A673 (cell line): ENCODE measurements at regions of chr10 and their contacts with region 1.

Region 1: GRCh38 chr10:26269754-26270153 is 53.2 kb downstream of the GAD2 start:
- DNase-seq: peak; percentile 81
- H3K4me3 ChIP-seq: peak overlapping the region; percentile 29
- H3K27ac ChIP-seq: no peak overlapping the region
- H3K4me1 ChIP-seq: peaks cover 5% of the 10 kb centered on the region
- H3K27me3 ChIP-seq: no peaks in the 10 kb centered on the region
- CTCF ChIP-seq: peak; percentile 74

Region 2: GRCh38 chr10:25725918-25726716 is 543.6 kb before region 1 on chr10:
- CTCF ChIA-PET with region 1: interaction called, 4 read pairs
- POLR2A ChIA-PET with region 1: no interaction called
- intact Hi-C with region 1: loop called (anchors 1 kb)
- DNase-seq: peak; percentile 89
- H3K4me3 ChIP-seq: no peak overlapping the region
- H3K27ac ChIP-seq: no peak overlapping the region
- H3K4me1 ChIP-seq: no peaks in the 10 kb centered on the region
- H3K27me3 ChIP-seq: no peaks in the 10 kb centered on the region
- CTCF ChIP-seq: peak; percentile 79

Region 3: DNA sequence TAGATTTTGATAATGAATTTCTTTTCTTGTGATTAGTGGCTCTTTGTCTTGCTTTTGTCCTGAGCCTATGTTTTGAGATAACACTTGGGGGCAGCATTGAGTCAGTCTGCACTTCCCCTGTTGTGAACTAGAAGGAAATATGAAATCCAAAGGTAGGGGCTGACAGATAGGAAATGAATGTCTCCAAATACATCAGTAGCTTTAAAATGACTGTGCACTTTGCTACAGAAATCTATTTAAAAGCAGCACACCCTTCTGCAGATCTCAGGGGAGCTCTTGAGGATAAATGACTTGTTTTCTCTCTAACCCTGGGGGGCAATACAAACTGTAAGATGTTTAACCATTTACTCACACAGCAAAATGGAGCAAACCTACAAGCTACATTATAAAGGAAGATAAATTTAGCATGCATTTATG is 511.7 kb before region 1 on chr10:
- CTCF ChIA-PET with region 1: interaction called, 5 read pairs
- POLR2A ChIA-PET with region 1: no interaction called
- intact Hi-C with region 1: loop called (anchors 2 kb)
- DNase-seq: peak; percentile 83
- H3K4me3 ChIP-seq: no peak overlapping the region
- H3K27ac ChIP-seq: no peak overlapping the region
- H3K4me1 ChIP-seq: peaks cover 6% of the 10 kb centered on the region
- H3K27me3 ChIP-seq: no peaks in the 10 kb centered on the region
- CTCF ChIP-seq: peak; percentile 88

Region 4: DNA sequence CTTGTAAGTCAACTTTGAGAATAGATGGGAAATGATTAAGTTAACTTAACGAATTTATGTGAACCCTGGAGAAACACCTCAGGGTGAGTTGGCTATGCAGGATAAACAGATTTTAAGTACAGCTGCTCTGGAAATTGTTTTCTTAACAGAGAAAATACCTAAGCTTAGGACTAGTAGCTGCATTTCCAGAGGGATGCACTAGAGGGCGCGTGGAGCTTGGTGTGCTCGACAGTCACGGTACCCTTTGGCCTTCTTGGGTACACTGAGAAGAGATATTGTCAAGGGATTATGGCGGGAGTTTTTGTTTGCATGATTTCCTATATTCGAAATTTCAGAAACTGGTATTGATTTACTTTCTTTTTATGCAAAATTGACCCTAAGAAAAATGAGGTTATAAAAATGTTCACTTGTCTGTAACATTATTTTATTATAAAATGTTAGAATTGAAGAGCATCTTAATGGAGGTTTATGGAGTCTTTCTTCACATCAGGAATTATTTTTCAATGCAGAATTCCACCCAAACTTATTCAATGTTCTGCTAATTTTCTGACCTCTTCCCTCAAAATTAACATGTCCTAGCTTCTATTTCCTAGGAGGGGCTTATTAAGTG is 394.1 kb before region 1 on chr10:
- CTCF ChIA-PET with region 1: interaction called, 7 read pairs
- POLR2A ChIA-PET with region 1: no interaction called
- intact Hi-C with region 1: loop called (anchors 1 kb)
- DNase-seq: peak; percentile 87
- H3K4me3 ChIP-seq: no peak overlapping the region
- H3K27ac ChIP-seq: no peak overlapping the region
- H3K4me1 ChIP-seq: no peaks in the 10 kb centered on the region
- H3K27me3 ChIP-seq: no peaks in the 10 kb centered on the region
- CTCF ChIP-seq: peak; percentile 96